Activated CD4-positive, alpha-beta T cell treated with anti-CD3 and anti-CD28 coated beads for 36 hours (primary cell): ENCODE measurements at regions of chr10 and their contacts with region 1.

Region 1: GRCh38 chr10:63166742-63167258 is 33.7 kb downstream of the NRBF2 start:
- DNase-seq: no peak
- ATAC-seq: peak; percentile 70
- H3K4me3 Mint-ChIP-seq: no peak overlapping the region
- H3K27ac Mint-ChIP-seq: no peak overlapping the region
- H3K4me1 Mint-ChIP-seq: peaks cover 25% of the 10 kb centered on the region
- H3K27me3 Mint-ChIP-seq: no peaks in the 10 kb centered on the region

Region 2: DNA sequence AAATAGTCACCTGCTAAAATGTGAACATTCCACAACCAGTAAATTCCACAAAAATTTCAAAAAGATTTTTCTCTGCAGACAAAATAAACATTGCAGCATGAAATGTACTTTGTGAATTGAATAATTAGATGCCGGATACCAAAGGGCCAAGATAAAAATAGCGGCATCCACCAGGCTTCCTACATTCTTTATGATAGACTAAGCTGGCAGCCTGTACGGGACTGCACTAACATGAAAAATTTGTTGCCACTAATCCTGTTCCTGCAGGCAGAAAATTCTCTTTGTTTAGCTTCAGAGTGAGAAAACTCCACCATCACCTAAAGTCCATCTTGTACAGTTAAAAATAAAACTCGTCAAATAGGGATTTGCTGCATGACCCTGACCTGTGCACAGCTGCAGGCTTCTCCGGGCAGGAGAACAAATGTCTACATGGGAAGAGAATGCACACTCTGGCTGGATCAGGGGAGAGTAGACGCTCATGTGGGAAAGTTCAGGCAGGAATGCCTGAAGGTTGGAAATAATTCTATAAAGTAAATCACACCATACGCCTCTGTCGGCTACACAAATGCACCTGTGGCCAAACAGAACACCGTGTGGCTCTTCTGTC is 377.8 kb before region 1 on chr10:
- CTCF ChIA-PET with region 1: no interaction called
- POLR2A ChIA-PET with region 1: no interaction called
- intact Hi-C with region 1: no loop called
- DNase-seq: no peak
- ATAC-seq: no peak
- H3K4me3 Mint-ChIP-seq: no peak overlapping the region
- H3K27ac Mint-ChIP-seq: no peak overlapping the region
- H3K4me1 Mint-ChIP-seq: no peaks in the 10 kb centered on the region
- H3K27me3 Mint-ChIP-seq: peaks cover 8% of the 10 kb centered on the region

Region 3: GRCh38 chr10:63145782-63146181 is 21.0 kb before region 1 on chr10:
- CTCF ChIA-PET with region 1: interaction called, 19 read pairs
- POLR2A ChIA-PET with region 1: interaction called, 4 read pairs
- intact Hi-C with region 1: no loop called
- DNase-seq: no peak
- ATAC-seq: peak; percentile 93
- H3K4me3 Mint-ChIP-seq: no peak overlapping the region
- H3K27ac Mint-ChIP-seq: no peak overlapping the region
- H3K4me1 Mint-ChIP-seq: peaks cover 45% of the 10 kb centered on the region
- H3K27me3 Mint-ChIP-seq: no peaks in the 10 kb centered on the region

Region 4: DNA sequence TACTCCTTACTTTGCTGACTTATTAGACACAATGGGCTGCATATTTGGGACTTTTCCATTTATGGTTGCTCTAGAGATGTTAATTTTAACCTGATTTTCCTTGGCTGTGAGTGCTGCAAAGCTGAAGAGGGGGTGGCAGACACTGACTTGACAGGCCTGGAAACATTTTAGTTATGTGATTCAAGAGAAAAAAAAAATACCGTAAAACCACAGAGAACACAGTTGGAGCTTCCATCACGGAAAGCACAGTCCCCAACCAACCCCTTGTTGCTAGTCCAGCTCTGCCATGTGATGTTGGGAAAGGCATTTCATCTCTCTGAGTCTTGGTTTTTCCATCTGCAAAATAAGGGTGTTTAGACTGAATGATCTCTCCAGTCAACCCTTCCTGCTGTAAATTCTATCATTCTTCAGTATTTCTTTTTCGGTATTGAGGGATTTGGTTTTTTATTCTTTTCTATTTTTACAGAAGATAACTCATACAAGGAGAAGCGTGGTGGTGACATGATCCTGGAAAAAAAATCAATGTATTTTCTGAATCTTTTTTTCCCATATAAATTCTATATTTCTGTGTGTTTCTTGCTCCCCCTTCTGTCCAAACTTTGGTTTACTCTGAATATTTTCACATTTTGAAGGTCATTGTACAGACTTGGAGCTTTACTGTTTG is 600.5 kb after region 1 on chr10:
- CTCF ChIA-PET with region 1: interaction called, 15 read pairs
- POLR2A ChIA-PET with region 1: no interaction called
- intact Hi-C with region 1: loop called in 1 of 2 experiments (anchors 1 kb)
- DNase-seq: no peak
- ATAC-seq: no peak
- H3K4me3 Mint-ChIP-seq: no peak overlapping the region
- H3K27ac Mint-ChIP-seq: no peak overlapping the region
- H3K4me1 Mint-ChIP-seq: no peaks in the 10 kb centered on the region
- H3K27me3 Mint-ChIP-seq: no peaks in the 10 kb centered on the region